ENCODE measurements at regions of chr10 and their contacts with region 1.

Region 1: DNA sequence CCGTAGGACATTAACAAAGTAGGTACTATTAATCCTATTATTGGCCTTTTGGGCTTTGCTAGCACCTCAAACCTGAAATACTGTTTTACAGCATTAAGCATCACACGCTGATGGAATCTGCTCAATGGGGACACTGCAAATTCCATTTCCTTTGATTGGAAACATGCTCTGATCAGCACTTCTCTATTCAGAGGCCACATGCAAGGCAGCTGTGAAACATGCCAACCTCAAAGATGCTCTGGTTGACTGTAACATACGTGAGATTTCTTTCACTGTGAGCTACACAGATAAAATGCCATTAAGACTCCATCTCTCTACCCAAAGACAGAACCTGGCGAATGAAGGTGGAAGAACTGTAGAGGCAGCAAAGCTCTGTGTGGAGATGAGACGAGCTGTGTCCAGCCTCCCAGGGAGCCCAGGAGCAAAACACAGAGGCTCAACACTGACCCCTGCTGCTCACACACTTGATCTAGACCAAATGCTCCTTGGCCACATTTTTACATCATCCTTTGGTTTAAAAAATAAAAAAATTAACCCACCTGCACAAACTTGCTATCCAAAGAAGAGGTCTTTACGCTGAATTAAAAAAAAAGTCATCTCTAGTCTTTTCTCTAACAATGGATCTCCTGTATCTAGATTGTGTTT is 8.0 kb downstream of the RSU1 start:
- DNase-seq: no peak
- H3K4me3 Mint-ChIP-seq: no peak overlapping the region
- H3K27ac Mint-ChIP-seq: no peak overlapping the region
- H3K4me1 Mint-ChIP-seq: peaks cover 13% of the 10 kb centered on the region
- H3K27me3 Mint-ChIP-seq: no peaks in the 10 kb centered on the region

Region 2: GRCh38 chr10:16787361-16787791 is 21.8 kb before region 1 on chr10:
- intact Hi-C with region 1: loop called (anchors 2 kb)
- DNase-seq: peak; percentile 49
- H3K4me3 Mint-ChIP-seq: peak overlapping the region; percentile 49
- H3K27ac Mint-ChIP-seq: peak overlapping the region; percentile 80
- H3K4me1 Mint-ChIP-seq: peaks cover 51% of the 10 kb centered on the region
- H3K27me3 Mint-ChIP-seq: no peaks in the 10 kb centered on the region

Measured in activated T-helper 1 cell treated with anti-CD3 and anti-CD28 coated beads, Interleukin-12 subunit alpha, Interleukin-12 subunit beta, Interleukin-2, Interleukin-4 antibody, amounts not matched to agents 30 ng/mL and 10 ng/mL and 1 ng/mL, durations not matched to agents 14 hours and 24 hours and 36 hours (primary cell).